ENCODE measurements at regions of chr11 and their contacts with region 1.

Region 1: DNA sequence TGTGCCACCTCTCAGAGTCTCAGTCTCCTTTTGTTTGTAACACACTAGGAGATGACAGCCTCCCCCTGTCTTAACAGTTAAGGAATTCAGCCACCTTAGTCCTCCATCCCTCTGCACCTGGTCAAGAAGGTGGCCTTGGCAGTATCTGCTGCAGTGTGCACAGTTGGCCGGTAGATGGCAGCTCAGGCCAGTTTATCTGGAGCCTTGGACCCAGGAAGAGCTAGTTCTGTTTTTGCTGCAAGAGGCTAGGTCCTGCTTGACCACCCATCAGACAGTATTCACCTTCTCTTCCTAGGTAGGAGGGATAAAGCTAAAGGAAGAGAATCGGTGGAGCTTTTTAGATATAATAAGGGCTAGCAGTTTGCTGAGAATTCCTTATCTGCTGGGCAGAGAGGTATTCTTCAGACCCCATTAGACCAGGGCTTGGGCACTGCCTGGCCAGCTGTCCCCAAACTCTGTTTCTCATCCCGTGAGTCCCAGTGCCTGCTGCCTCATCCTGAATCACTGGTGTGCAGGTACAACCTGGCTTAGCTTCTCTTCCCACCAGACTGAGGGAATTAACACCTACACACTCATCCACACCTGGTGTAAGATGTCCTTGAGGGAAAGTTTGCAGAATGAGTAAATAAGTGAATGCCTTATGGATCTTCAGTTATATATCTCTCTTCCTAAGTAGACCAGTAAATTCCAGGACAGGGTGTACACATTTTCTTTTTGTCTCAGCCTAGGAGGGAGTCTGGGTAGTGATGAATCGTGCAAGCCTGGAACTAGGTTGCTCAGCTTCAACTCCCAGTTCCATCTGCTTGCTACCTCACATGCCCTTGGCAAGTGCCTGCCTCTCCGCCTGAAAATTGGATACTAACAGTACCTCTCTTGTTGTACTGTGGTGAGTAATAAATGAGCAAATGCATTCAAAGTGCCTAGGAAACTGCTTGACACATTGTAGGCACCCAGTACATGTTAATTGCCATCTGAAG is 70.8 kb upstream of the NARS2 start:
- DNase-seq: peak; percentile 78
- ATAC-seq: no peak
- H3K4me3 Mint-ChIP-seq: no peak overlapping the region
- H3K27ac Mint-ChIP-seq: no peak overlapping the region
- H3K4me1 Mint-ChIP-seq: peaks cover 31% of the 10 kb centered on the region
- H3K27me3 Mint-ChIP-seq: peaks cover 7% of the 10 kb centered on the region

Region 2: DNA sequence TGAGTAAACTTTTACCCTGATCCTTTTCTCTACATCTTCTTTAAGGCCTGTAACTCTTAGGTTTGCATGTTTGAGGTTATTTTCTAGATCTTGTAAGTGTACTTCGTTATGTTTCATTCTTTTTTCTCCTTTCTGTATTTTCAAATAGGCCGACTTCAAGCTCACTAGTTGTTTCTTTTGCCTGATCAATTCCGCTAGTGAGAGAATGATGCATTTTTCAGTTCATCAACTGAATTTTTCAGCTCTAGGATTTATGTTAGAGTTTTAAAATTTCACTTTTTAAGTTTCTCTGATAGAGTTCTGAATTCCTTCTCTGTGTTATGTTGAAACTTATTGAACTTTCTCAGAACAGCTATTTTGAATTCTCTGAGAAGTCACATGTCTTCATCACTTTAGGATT is 15.4 kb before region 1 on chr11:
- CTCF ChIA-PET with region 1: no interaction called
- POLR2A ChIA-PET with region 1: no interaction called
- intact Hi-C with region 1: no loop called
- DNase-seq: no peak
- ATAC-seq: no peak
- H3K4me3 Mint-ChIP-seq: no peak overlapping the region
- H3K27ac Mint-ChIP-seq: no peak overlapping the region
- H3K4me1 Mint-ChIP-seq: peaks cover 7% of the 10 kb centered on the region
- H3K27me3 Mint-ChIP-seq: peaks cover 15% of the 10 kb centered on the region

Region 3: GRCh38 chr11:78660471-78660870 is 15.0 kb after region 1 on chr11:
- CTCF ChIA-PET with region 1: interaction called, 13 read pairs
- POLR2A ChIA-PET with region 1: no interaction called
- intact Hi-C with region 1: no loop called
- DNase-seq: no peak
- ATAC-seq: no peak
- H3K4me3 Mint-ChIP-seq: no peak overlapping the region
- H3K27ac Mint-ChIP-seq: no peak overlapping the region
- H3K4me1 Mint-ChIP-seq: no peaks in the 10 kb centered on the region
- H3K27me3 Mint-ChIP-seq: peaks cover 11% of the 10 kb centered on the region

Region 4: DNA sequence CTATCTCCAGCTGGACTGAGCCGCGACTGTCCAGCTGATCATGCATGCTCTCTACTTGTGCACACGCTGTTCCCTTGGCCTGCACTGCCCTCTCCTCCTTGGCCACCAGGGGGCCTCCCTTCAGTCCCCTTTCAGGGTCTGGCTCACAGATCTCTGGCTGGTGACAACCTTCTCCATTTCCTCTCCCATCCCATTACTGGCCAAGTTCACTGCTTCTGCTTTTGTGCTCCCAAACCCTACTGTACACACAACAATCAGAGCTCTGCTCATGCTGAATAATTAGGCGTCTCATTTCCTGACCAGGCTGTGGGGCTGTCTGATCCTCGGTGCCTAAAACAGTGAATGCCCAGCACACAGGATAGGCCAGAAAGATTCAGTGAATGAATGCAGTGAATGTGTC is 153.1 kb after region 1 on chr11:
- CTCF ChIA-PET with region 1: interaction called, 11 read pairs
- POLR2A ChIA-PET with region 1: no interaction called
- intact Hi-C with region 1: loop called in 1 of 2 experiments (anchors 2 kb)
- DNase-seq: peak; percentile 72
- ATAC-seq: peak; percentile 74
- H3K4me3 Mint-ChIP-seq: no peak overlapping the region
- H3K27ac Mint-ChIP-seq: no peak overlapping the region
- H3K4me1 Mint-ChIP-seq: no peaks in the 10 kb centered on the region
- H3K27me3 Mint-ChIP-seq: peaks cover 8% of the 10 kb centered on the region

Region 5: GRCh38 chr11:79100093-79100910 is 454.8 kb after region 1 on chr11:
- CTCF ChIA-PET with region 1: interaction called, 18 read pairs
- POLR2A ChIA-PET with region 1: no interaction called
- intact Hi-C with region 1: loop called (anchors 1 to 5 kb)
- DNase-seq: peak; percentile 65
- ATAC-seq: peak; percentile 80
- H3K4me3 Mint-ChIP-seq: no peak overlapping the region
- H3K27ac Mint-ChIP-seq: no peak overlapping the region
- H3K4me1 Mint-ChIP-seq: no peaks in the 10 kb centered on the region
- H3K27me3 Mint-ChIP-seq: peaks cover 23% of the 10 kb centered on the region

Region 6: DNA sequence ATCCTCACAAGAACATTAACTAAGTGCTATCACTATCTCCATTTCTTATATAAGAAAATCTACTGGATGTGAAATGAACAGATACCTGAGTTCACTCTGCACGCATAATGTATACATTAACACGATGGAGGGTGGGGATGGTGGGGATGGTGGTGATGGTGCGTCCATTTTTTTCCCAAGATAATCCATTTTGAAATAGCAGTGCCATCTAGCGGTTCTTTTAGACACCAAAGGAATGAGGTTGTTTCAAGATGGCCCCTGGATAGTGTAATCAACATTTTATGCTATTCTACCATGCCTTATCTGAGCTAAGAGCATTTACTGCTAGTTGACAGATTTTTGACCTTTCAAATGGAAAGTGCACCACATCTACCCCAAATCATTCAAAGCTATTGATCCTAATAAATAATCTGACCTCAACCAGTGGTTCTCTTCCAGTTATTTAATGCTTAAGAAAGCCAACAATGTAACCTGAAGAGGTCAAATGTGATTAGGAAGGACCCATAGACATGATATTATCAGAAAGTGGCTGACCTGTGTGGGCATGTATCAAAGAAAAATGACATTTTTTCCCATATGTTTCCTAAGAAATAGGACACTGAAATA is 1510.0 kb after region 1 on chr11:
- CTCF ChIA-PET with region 1: no interaction called
- POLR2A ChIA-PET with region 1: no interaction called
- intact Hi-C with region 1: loop called in 1 of 2 experiments (anchors 5 kb)
- DNase-seq: no peak
- ATAC-seq: no peak
- H3K4me3 Mint-ChIP-seq: no peak overlapping the region
- H3K27ac Mint-ChIP-seq: no peak overlapping the region
- H3K4me1 Mint-ChIP-seq: no peaks in the 10 kb centered on the region
- H3K27me3 Mint-ChIP-seq: no peaks in the 10 kb centered on the region

Measured in activated CD4-positive, alpha-beta T cell treated with anti-CD3 and anti-CD28 coated beads for 36 hours (primary cell).